ENCODE measurements at regions of chr2 and their contacts with region 1.

Region 1: DNA sequence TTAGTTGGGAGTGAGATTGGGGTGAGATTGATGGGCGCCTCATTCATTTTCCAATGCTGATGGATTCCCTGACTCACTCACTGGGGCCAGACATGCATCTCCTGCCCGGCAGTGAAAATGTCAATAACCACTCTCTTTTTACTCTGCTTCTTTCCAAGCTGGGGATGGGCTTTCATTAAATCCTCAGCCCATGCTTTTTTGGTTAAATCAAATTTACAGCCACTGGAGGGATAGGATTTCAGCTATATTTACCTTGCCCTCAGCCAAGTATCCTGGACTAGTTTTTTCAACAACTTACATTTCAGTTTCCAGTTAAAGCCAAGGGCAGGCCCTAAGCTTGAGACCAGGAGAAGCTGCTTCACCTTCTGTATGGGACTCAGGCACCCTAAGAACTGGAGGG is 162.8 kb downstream of the TSN start:
- DNase-seq: no peak
- ATAC-seq: no peak
- H3K4me3 Mint-ChIP-seq: no peak overlapping the region
- H3K27ac Mint-ChIP-seq: no peak overlapping the region
- H3K4me1 Mint-ChIP-seq: no peaks in the 10 kb centered on the region
- H3K27me3 Mint-ChIP-seq: no peaks in the 10 kb centered on the region; the same call in 1 of the 2 replicates
- CTCF ChIP-seq: no peak

Region 2: GRCh38 chr2:121897335-121897970 is 20.8 kb before region 1 on chr2:
- CTCF ChIA-PET with region 1: interaction called, 10 read pairs
- POLR2A ChIA-PET with region 1: no interaction called
- DNase-seq: no peak
- ATAC-seq: peak; percentile 62
- H3K4me3 Mint-ChIP-seq: no peak overlapping the region
- H3K27ac Mint-ChIP-seq: no peak overlapping the region
- H3K4me1 Mint-ChIP-seq: no peaks in the 10 kb centered on the region
- H3K27me3 Mint-ChIP-seq: no peaks in the 10 kb centered on the region
- CTCF ChIP-seq: no peak

Region 3: GRCh38 chr2:121944072-121944831 is 26.0 kb after region 1 on chr2:
- CTCF ChIA-PET with region 1: no interaction called
- POLR2A ChIA-PET with region 1: no interaction called
- DNase-seq: no peak
- ATAC-seq: no peak
- H3K4me3 Mint-ChIP-seq: no peak overlapping the region
- H3K27ac Mint-ChIP-seq: no peak overlapping the region
- H3K4me1 Mint-ChIP-seq: no peaks in the 10 kb centered on the region
- H3K27me3 Mint-ChIP-seq: no peaks in the 10 kb centered on the region
- CTCF ChIP-seq: no peak

Region 4: GRCh38 chr2:121999267-121999681 is 81.0 kb after region 1 on chr2:
- CTCF ChIA-PET with region 1: no interaction called
- POLR2A ChIA-PET with region 1: no interaction called
- DNase-seq: no peak
- ATAC-seq: peak; percentile 18; the same call in 1 of the 2 replicates
- H3K4me3 Mint-ChIP-seq: no peak overlapping the region
- H3K27ac Mint-ChIP-seq: no peak overlapping the region
- H3K4me1 Mint-ChIP-seq: peaks cover 22% of the 10 kb centered on the region
- H3K27me3 Mint-ChIP-seq: no peaks in the 10 kb centered on the region; the same call in 1 of the 2 replicates
- CTCF ChIP-seq: no peak